Right ventricle myocardium inferior (tissue), 1 donor: ENCODE measurements at regions of chr2 and their contacts with region 1.

Region 1: DNA sequence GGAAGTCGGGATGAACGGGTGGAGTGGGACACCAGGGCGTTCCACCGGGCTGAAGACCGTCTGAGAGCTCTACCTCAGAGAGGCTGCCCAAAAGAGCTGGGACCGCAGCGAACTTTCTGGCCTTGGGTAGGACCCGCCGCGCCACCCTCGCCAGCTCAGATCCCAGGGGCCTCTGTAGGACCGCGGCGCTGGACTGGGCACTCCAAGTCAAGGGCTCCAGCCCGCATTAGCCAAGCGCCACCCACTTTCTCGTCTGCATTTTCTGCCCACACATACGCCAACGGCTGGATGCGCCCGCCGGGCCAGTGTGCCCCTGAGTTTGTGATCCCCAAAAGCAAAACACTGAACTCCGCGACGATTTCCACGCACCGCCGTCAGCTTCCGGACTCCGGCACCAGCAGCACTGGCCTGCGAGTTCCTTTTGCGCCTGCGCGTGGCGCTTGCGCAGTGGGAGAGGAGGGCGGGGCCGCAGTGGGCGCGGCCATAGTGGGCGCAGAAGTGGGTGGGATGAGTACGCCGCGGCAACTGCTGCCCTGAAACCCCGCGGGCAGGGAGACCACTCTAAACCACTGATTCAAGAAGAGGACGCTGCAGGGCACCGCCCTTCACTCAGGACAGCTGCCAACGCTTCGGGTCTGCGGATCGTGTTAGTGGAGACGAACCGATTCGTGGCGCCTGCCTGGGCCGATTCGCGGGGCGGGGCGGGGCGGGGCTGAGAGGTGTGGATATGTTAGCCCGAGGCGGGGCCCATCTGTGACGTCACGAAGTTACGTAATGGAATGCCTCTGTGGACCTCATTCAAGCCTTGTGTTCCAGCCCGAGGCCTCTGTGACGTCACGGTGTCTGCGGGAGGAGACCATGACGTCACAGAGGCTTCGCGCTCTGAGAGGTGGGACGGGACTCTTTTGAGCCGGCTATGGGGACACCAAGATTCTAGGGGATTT is 10.5 kb downstream of the OSR1 start:
- DNase-seq: peak; percentile 98
- ATAC-seq: peak; percentile 97

Region 2: DNA sequence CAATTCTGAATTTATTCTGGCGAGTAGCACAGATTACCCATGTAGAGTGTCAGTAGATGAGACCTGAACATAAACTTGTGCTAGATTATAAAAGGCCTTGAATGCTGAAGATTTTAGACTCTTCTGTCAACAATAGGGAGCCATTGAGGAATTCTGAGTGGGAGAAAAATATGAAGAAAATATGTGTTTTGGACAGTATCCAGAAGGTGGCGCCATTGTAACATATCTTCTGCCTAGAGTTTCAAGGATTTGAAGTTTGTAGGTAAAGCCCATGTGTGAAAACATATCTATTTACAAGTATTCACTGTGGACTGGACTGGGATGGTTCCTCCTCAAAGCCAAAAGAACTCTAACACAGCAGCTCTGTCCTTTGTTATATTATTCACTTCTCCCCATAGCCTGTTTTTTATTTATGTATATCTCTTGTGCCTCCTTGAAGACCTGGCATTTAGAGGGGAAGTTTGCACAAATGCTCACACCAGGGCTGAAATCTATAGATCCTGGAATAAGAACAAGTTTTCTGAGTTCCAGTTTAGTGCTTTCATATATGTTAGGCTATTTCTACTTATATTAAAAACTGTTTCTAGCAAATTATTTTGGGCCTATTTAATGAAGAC is 912.4 kb before region 1 on chr2:
- intact Hi-C with region 1: loop called (anchors 10 kb)
- DNase-seq: no peak
- ATAC-seq: peak; percentile 43

Region 3: GRCh38 chr2:18749912-18750526 is 597.9 kb before region 1 on chr2:
- intact Hi-C with region 1: loop called (anchors 5 kb)
- DNase-seq: no peak
- ATAC-seq: no peak

Region 4: DNA sequence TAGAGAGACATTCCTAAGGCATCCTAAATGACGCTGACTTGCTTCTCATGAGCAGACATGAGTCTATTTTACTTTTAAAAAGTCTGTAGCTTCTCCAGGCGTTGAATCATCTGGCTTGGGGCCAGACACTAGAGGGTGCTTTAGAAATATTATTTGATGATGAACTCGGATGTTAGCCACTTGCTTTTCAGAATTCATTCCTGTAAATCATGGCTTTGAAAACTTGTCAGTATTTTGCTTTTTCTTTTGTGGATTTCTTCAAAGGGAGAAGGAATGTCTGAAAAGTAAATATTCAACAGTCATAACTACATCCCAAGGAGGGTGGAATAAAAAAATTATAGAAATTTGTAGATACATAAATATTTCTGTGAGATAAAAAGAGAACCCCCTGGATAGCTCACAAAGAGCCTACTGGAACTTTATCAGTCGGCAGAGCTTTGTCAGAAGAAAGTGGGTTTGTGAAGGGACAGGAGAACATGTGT is 360.3 kb before region 1 on chr2:
- intact Hi-C with region 1: loop called (anchors 5 kb)
- DNase-seq: peak; percentile 72
- ATAC-seq: peak; percentile 36